ENCODE measurements at regions of chr4 and their contacts with region 1.

Region 1: GRCh38 chr4:151641176-151641575 is 119.6 kb downstream of the GATB start:
- DNase-seq: no peak
- ATAC-seq: peak; percentile 89 to 92 (median 90)
- H3K4me3 ChIP-seq: no peak overlapping the region
- H3K27ac ChIP-seq: peak overlapping the region; percentile 81
- H3K4me1 ChIP-seq: peaks cover 17% of the 10 kb centered on the region
- H3K27me3 ChIP-seq: no peaks in the 10 kb centered on the region
- CTCF ChIP-seq: no peak

Region 2: DNA sequence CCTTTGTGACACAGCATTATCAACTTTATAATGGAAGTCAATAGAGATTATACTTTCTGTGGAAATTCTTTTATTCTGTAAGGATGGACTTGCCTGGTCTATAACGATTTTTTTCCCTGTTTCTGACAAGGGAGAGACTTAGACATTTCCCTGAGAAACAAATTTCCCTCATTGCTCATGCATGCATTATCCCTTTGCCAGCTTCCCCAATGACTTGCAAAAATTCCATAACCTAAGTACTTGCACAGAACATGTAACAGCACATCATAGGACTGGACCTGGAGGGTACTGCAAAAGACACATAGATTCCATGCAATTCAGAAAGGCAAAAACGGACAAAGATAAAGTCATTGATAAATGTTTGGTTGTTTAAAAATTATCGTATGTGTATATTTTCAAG is 65.5 kb before region 1 on chr4:
- intact Hi-C with region 1: loop called in 1 of 2 experiments (anchors 5 kb)
- DNase-seq: no peak
- ATAC-seq: no peak
- H3K4me3 ChIP-seq: no peak overlapping the region
- H3K27ac ChIP-seq: peak overlapping the region; percentile 24
- H3K4me1 ChIP-seq: peaks cover 13% of the 10 kb centered on the region
- H3K27me3 ChIP-seq: no peaks in the 10 kb centered on the region
- CTCF ChIP-seq: no peak

Region 3: DNA sequence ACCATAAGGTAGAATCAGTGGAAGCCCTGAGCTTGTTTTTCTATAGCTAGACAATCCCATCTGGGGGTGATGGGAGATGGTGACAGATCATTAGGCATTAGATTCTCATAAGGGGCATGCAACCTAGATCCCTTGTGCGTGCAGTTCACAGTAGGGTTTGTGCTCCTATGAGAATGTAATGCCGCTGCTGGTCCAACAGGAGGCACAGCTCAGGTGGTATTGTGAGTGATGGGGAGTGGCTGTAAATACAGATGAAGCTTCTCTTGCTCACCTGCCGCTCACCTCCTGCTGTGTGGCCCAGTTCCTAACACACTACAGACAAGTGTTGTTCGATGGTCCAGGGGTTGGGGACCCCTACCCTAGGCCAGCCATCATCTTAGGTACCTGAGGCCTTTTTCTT is 125.5 kb after region 1 on chr4:
- intact Hi-C with region 1: no loop called
- DNase-seq: no peak
- ATAC-seq: no peak
- H3K4me3 ChIP-seq: no peak overlapping the region
- H3K27ac ChIP-seq: no peak overlapping the region
- H3K4me1 ChIP-seq: no peaks in the 10 kb centered on the region
- H3K27me3 ChIP-seq: peaks cover 0 to 2% (median 0%) of the 10 kb centered on the region in 3 donors
- CTCF ChIP-seq: no peak

Measured in psoas muscle (tissue), 8 donors.